Mammary epithelial cell (primary cell): ENCODE measurements at regions of chr15 and their contacts with region 1.

Region 1: DNA sequence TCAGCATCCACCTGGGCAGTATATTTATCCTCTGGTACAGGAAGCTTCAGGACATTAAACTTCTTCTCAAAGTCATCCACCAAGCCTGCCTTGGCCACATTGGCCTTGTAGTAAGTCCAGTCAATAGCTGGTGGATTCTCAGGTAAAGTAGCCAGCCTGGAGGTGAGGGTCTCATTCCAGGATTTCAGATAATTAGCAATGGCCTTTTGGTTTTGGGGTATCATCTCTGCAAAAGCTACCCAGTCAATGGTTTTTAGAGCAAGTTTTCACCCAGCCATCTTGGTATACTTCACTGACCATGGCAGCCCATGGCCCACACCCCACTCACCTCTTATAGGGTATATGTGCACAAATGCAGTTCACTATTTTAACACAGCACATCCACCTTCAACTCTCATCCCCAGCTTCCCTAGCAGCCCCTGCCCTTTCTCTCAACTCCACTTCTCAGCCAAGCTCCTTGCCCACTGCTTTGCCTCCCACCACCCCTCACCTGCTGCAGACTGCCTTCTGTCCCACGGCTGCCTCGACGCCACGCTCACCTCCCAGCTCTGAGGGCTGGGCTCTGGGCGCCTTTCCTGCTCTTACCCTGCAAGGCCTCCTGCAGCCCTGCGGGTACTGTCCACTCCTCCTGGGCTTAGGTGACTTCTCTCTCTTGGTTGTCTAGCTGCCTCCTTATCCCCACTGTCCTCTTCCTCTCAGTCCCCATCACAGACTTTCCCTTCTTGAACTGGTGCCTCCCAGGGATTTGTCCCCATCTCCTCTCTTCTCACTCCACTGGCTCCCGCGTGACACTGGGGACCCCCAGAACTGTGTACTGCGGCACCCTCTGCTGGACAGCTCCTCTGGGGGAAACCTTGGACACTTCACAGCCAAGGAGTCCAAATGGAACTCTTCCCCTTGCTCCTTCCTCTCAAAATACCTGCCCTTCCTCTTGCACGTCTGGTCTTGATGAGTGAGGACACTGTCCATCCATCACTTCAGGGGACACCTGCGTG is 1.7 kb upstream of the TGM5 start:
- DNase-seq: no peak
- H3K4me3 ChIP-seq: no peak overlapping the region
- H3K27ac ChIP-seq: no peak overlapping the region
- H3K4me1 ChIP-seq: peaks cover 4% of the 10 kb centered on the region
- H3K27me3 ChIP-seq: no peaks in the 10 kb centered on the region
- CTCF ChIP-seq: peak; percentile 8 to 44

Region 2: DNA sequence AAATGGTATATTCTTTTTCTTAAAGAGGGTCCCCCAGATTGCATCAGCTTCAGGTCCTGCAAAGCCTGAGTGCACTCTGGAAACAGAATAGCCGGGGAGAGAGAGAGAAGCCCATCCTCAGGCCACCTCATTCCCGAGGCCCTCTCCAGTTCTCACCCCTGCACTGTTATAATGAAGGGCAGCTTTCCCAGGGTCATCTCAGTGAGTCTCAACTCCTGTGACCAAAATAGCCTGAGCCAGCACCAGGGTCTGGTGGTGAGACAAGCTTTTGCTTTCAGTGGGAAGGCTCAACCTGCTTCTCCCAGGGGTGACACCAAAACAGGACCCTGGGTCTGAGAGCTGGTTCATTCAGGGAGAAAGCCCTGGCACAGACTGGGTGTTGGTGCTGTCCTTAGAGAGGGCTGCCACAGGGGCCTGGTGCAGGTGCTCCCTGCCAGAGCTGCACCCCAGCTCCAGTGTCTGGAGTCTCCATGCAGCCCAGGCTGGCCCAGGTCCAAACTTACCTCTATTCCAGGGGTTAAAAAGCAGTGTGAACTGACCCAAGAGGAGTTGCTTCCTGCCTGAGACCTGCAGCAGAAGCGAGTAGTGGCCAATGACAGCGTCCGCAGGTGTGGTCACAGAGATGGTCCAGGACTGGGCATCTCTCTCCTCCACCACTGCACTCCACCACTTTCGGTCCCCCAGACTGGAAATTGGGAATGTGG is 53.7 kb before region 1 on chr15:
- CTCF ChIA-PET with region 1: interaction called, 4 read pairs
- dilution Hi-C with region 1: loop called (anchors 5 kb)
- in situ Hi-C with region 1: no loop called
- intact Hi-C with region 1: no loop called
- DNase-seq: no peak
- H3K4me3 ChIP-seq: no peak overlapping the region
- H3K27ac ChIP-seq: no peak overlapping the region
- H3K4me1 ChIP-seq: peaks cover 10% of the 10 kb centered on the region
- H3K27me3 ChIP-seq: no peaks in the 10 kb centered on the region
- CTCF ChIP-seq: no peak

Region 3: GRCh38 chr15:43225201-43225949 is 43.0 kb before region 1 on chr15:
- CTCF ChIA-PET with region 1: interaction called, 6 read pairs
- dilution Hi-C with region 1: no loop called
- in situ Hi-C with region 1: no loop called
- intact Hi-C with region 1: loop called (anchors 1 kb)
- DNase-seq: peak; percentile 58
- H3K4me3 ChIP-seq: no peak overlapping the region
- H3K27ac ChIP-seq: no peak overlapping the region
- H3K4me1 ChIP-seq: no peaks in the 10 kb centered on the region
- H3K27me3 ChIP-seq: no peaks in the 10 kb centered on the region
- CTCF ChIP-seq: peak; percentile 87 to 88

Region 4: GRCh38 chr15:43316016-43316970 is 47.9 kb after region 1 on chr15:
- CTCF ChIA-PET with region 1: no interaction called
- dilution Hi-C with region 1: loop called (anchors 5 kb)
- in situ Hi-C with region 1: no loop called
- intact Hi-C with region 1: no loop called
- DNase-seq: no peak
- H3K4me3 ChIP-seq: no peak overlapping the region
- H3K27ac ChIP-seq: no peak overlapping the region
- H3K4me1 ChIP-seq: no peaks in the 10 kb centered on the region
- H3K27me3 ChIP-seq: no peaks in the 10 kb centered on the region
- CTCF ChIP-seq: no peak

Region 5: DNA sequence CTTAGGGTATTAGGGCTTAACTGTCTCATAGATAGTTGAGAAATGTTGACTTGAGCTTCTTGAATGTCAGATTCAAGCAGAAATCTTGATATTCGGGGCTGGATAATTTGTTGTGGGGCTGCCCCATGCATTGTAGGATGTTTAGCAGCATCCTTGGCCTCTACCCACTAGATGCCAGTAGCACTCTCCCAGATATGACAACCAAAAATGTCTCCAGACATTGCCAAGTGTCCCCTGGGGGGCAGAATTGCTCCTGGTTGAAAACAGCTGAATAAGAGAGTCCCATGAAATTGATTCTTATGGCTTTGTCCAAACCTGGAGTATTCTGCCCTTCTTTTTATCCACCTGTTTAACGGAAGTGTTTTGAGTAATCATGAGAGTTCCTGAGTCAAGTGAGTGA is 77.9 kb after region 1 on chr15:
- CTCF ChIA-PET with region 1: no interaction called
- dilution Hi-C with region 1: no loop called
- in situ Hi-C with region 1: no loop called
- intact Hi-C with region 1: no loop called
- DNase-seq: no peak
- H3K4me3 ChIP-seq: no peak overlapping the region
- H3K27ac ChIP-seq: no peak overlapping the region
- H3K4me1 ChIP-seq: no peaks in the 10 kb centered on the region
- H3K27me3 ChIP-seq: no peaks in the 10 kb centered on the region
- CTCF ChIP-seq: no peak

Region 6: GRCh38 chr15:43449981-43450380 is 181.6 kb after region 1 on chr15:
- CTCF ChIA-PET with region 1: no interaction called
- dilution Hi-C with region 1: no loop called
- in situ Hi-C with region 1: no loop called
- intact Hi-C with region 1: no loop called
- DNase-seq: no peak
- H3K4me3 ChIP-seq: no peak overlapping the region
- H3K27ac ChIP-seq: no peak overlapping the region
- H3K4me1 ChIP-seq: no peaks in the 10 kb centered on the region
- H3K27me3 ChIP-seq: no peaks in the 10 kb centered on the region
- CTCF ChIP-seq: no peak